CD14-positive monocyte (primary cell): ENCODE measurements at regions of chr9 and their contacts with region 1.

Region 1: DNA sequence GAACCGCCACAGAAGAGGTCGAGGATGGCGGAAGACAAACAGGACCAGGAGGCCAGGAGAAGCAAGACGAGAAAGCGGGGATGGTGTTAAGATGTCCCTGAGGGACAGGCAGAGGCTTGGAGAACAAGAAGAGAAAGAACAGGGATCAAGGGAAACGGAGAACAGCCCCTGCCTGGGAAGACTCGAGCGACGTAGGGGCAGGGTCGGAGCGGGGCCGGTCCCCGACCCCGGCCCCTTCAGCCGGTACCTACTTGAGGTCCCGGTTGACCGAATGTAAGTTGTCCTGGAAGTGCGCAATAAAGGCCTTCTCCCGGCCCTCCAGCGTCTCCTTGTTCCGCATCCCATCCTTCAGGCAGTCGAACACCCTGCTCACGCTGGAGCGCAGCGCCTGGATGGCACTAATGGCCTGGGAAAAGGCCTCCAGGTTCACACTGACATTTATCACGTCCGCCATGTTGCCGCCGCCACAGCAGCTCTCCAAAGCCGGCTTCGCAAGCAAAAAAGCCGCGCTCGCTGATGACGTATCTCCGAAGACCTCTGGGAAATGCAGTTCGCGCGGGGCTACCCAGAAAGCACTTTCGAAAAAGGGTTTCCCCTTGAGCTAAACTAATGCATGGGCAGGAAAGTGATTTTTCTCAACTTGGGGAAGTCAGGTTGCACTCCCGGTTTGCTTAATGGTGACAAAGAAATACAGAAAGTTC is at the start of gene MED27:
- DNase-seq: peak; percentile 88 to 95 (median 89)
- H3K4me3 ChIP-seq: peak within 1 kb of the TSS; percentile 75 to 88 (median 86)
- H3K4me3 Mint-ChIP-seq: peak within 1 kb of the TSS; percentile 91 to 99
- H3K27ac ChIP-seq: peak within 1 kb of the TSS; percentile 25 to 82
- H3K27ac Mint-ChIP-seq: peak within 1 kb of the TSS; percentile 73 to 97 (median 85)
- H3K4me1 ChIP-seq: peaks cover 15 to 22% of the 10 kb centered on the region in 2 donors
- H3K4me1 Mint-ChIP-seq: peaks cover 25% of the 10 kb centered on the region
- H3K27me3 ChIP-seq: no peaks in the 10 kb centered on the region
- H3K27me3 Mint-ChIP-seq: peaks cover 0 to 5% (median 4%) of the 10 kb centered on the region in 3 donors
- CTCF ChIP-seq: no peak
- polyA plus RNA-seq, gene MED27: 14.0 to 26.9 (median 25.8) TPM

Region 2: DNA sequence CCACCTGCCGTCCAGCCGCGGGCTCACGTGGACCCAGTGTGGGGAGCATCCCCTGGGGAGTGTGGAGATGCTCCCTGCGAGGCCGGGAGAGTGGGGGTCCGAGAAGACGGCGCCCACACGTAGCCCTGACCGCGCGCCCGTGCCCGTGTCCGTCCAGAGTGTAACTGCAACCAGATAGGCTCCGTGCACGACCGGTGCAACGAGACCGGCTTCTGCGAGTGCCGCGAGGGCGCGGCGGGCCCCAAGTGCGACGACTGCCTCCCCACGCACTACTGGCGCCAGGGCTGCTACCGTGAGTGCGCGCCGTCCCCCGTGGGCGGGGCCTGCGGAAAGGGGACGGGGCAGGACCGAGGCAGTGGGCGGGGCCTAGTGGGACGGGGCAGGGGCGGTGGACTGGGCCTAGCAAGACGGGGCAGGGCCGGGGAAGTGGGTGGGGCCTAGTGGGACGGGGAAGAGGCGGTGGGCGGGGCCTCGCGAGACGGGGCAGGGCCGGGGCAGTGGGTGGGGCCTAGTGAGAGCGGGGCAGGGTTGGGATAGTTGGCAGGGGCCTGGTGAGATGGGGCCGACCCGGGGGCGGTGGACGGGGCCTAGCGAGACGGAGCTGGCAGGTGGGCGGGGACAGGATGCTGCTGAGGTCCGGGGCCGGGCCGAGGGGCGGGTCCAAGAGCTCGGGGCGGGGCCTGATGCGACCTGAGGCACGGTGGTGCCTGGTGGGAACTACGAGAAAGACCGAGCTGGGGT is 161.4 kb after region 1 on chr9:
- intact Hi-C with region 1: loop called in 1 of 2 experiments (anchors 10 kb)
- DNase-seq: peak; percentile 93 to 98 (median 97)
- H3K4me3 ChIP-seq: peak overlapping the region; percentile 63 to 84 (median 74)
- H3K4me3 Mint-ChIP-seq: peak overlapping the region; percentile 97 to 99
- H3K27ac ChIP-seq: peak overlapping the region in 1 of 2 donors; percentile 45
- H3K27ac Mint-ChIP-seq: peak overlapping the region; percentile 82 to 95 (median 91)
- H3K4me1 ChIP-seq: peaks cover 34 to 50% of the 10 kb centered on the region in 2 donors
- H3K4me1 Mint-ChIP-seq: peaks cover 35% of the 10 kb centered on the region
- H3K27me3 ChIP-seq: peaks cover 2 to 31% of the 10 kb centered on the region in 2 donors
- H3K27me3 Mint-ChIP-seq: peaks cover 10 to 53% (median 45%) of the 10 kb centered on the region in 3 donors
- CTCF ChIP-seq: no peak

Region 3: DNA sequence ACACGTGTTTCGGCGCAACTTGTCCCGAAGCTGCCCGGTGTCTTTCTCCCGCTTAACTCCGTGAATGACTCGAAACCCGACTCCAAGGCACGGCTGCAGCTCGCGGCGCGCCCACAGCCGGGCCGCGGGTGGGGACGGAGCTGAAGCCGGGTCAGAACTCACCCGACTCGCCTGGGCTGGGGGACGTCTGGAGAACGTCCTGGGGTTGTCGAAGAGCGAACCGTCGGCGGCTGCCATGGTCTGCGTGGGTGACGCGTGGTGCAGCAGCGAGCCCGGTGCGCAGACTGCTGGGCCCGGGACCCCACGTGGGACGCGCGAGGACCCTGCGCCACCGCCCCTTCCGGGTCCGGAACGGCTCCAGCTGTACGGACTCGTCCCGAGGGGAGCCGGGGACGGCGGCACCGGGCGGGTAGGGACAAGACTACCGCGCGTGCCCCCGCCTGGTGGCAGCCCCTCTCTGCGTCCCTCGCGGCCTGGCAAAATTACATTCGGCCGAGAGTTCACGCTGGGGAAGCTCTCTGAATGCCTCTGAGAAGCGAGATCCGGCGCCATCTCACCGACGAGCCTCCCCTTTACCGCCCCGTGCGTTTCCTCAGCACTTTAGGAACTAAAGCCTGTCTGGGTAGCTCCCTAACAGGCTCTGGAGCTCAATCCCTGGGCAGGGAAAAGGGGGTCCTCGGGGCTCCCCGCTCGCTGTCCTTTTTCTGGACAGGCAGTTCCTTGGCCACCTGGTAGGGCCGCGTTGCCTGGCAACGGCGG is 590.3 kb after region 1 on chr9 and contains the start of gene DDX31:
- intact Hi-C with region 1: loop called in 1 of 2 experiments (anchors 5 kb)
- DNase-seq: peak; percentile 79 to 80 (median 80)
- H3K4me3 ChIP-seq: peak within 1 kb of the TSS; percentile 88 to 99 (median 95)
- H3K4me3 Mint-ChIP-seq: peak within 1 kb of the TSS; percentile 86 to 93
- H3K27ac ChIP-seq: peak within 1 kb of the TSS; percentile 94 to 95
- H3K27ac Mint-ChIP-seq: peak within 1 kb of the TSS; percentile 87 to 97 (median 96)
- H3K4me1 ChIP-seq: peaks cover 22 to 38% of the 10 kb centered on the region in 2 donors
- H3K4me1 Mint-ChIP-seq: peaks cover 39% of the 10 kb centered on the region
- H3K27me3 ChIP-seq: no peaks in the 10 kb centered on the region
- H3K27me3 Mint-ChIP-seq: no peaks in the 10 kb centered on the region
- CTCF ChIP-seq: no peak
- polyA plus RNA-seq, gene DDX31: 1.1 to 4.2 (median 1.5) TPM

Region 4: GRCh38 chr9:132877824-132878694 is 798.5 kb after region 1 on chr9 and contains the start of gene AK8:
- intact Hi-C with region 1: loop called (anchors 5 kb)
- DNase-seq: peak; percentile 62 to 75 (median 67)
- H3K4me3 ChIP-seq: peak within 1 kb of the TSS; percentile 80 to 97 (median 93)
- H3K4me3 Mint-ChIP-seq: peak within 1 kb of the TSS; percentile 79 to 80
- H3K27ac ChIP-seq: peak within 1 kb of the TSS in 1 of 2 donors; percentile 73
- H3K27ac Mint-ChIP-seq: peak within 1 kb of the TSS in 5 of 7 donors; percentile 33 to 88 (median 78)
- H3K4me1 ChIP-seq: peaks cover 13 to 25% of the 10 kb centered on the region in 2 donors
- H3K4me1 Mint-ChIP-seq: peaks cover 15% of the 10 kb centered on the region
- H3K27me3 ChIP-seq: peaks cover 0 to 9% of the 10 kb centered on the region in 2 donors
- H3K27me3 Mint-ChIP-seq: peaks cover 10 to 17% (median 17%) of the 10 kb centered on the region in 3 donors
- CTCF ChIP-seq: no peak
- polyA plus RNA-seq, gene AK8: 0.08 TPM in 1 of 3 donors, not detected in the others